CD14-positive monocyte (primary cell): ENCODE measurements at regions of chr9 and their contacts with region 1.

Region 1: DNA sequence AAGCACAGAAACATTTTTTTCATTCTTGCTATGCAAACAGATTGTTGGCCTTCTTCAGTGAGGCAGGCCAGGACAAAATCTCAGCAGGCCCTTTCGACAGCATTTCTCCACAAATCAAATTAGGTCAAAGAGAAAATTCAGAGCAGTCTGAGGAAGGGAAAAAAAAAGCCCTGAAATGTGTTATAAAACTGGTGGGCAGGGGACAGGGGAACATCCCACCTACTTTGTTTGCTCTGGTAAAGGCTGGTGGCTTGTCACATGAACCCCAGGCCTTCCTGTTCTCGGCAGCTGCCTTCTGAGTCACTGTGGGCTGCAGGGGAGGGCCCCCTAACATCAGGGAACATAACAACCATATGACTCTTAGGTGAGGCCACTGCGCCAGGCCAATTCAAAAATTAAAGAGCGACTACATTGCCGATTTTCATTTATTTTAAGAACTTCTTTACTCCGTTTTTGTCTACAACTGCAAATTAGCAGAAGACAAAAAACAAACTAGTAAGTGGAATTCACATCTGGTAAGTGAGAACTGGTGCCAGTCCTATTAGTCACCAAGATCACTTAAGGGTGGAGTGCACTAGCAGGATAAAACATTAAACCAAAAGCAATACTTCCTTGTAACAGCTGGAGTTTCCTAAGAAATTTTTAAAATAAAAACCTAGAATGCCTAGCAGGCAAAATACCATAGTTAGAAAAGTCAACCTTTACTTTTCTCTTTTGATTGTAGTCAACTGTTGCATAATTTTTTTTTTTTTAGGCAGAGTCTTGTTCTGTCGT is 46.2 kb upstream of the DENND4C start:
- DNase-seq: peak; percentile 83 to 92 (median 83)
- H3K4me3 ChIP-seq: no peak overlapping the region
- H3K4me3 Mint-ChIP-seq: peak overlapping the region in 1 of 2 donors; percentile 53
- H3K27ac ChIP-seq: peak overlapping the region; percentile 57 to 93
- H3K27ac Mint-ChIP-seq: peak overlapping the region; percentile 81 to 97 (median 91)
- H3K4me1 ChIP-seq: peaks cover 27 to 38% of the 10 kb centered on the region in 2 donors
- H3K4me1 Mint-ChIP-seq: peaks cover 37% of the 10 kb centered on the region
- H3K27me3 ChIP-seq: no peaks in the 10 kb centered on the region
- H3K27me3 Mint-ChIP-seq: peaks cover 0 to 2% (median 2%) of the 10 kb centered on the region in 3 donors
- CTCF ChIP-seq: no peak

Region 2: GRCh38 chr9:19230356-19231125 is 46.2 kb after region 1 on chr9 and contains the start of gene DENND4C:
- intact Hi-C with region 1: loop called in 1 of 2 experiments (anchors 5 kb)
- DNase-seq: peak; percentile 78 to 83 (median 81)
- H3K4me3 ChIP-seq: peak within 1 kb of the TSS; percentile 77 to 83 (median 82)
- H3K4me3 Mint-ChIP-seq: peak within 1 kb of the TSS; percentile 80 to 92
- H3K27ac ChIP-seq: peak within 1 kb of the TSS; percentile 60 to 81
- H3K27ac Mint-ChIP-seq: peak within 1 kb of the TSS in 6 of 7 donors; percentile 50 to 90 (median 79)
- H3K4me1 ChIP-seq: peaks cover 29 to 33% of the 10 kb centered on the region in 2 donors
- H3K4me1 Mint-ChIP-seq: peaks cover 12% of the 10 kb centered on the region
- H3K27me3 ChIP-seq: peaks cover 0 to 3% of the 10 kb centered on the region in 2 donors
- H3K27me3 Mint-ChIP-seq: peaks cover 2 to 3% (median 3%) of the 10 kb centered on the region in 3 donors
- CTCF ChIP-seq: no peak
- polyA plus RNA-seq, gene DENND4C: 8.1 to 15.4 (median 12.7) TPM